Posterior vena cava (tissue), 2 donors: ENCODE measurements at regions of chr14 and their contacts with region 1.

Region 1: GRCh38 chr14:50371546-50371945 is 25.1 kb downstream of the CDKL1 start:
- DNase-seq: no peak

Region 2: GRCh38 chr14:50156111-50156510 is 215.4 kb before region 1 on chr14:
- intact Hi-C with region 1: no loop called
- DNase-seq: no peak

Region 3: DNA sequence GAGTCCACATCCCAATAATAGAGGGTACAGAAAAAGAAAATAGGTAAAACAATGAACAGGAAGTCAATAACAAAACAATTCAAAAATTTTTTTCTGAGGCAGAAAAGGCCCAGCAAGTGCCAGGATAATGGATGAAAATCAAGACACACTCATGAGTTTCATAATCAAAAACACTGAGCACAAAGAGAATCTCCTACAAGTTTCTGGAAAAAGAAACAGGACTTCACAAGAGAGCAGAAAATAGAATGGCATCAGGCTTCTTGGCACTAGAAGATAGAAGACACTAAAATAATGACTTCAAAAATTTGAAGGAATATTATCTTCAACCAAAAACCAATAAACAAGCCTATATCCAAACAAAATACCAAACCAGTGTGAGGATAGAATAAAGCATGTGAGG is 22.6 kb before region 1 on chr14:
- intact Hi-C with region 1: loop called in 1 of 2 experiments (anchors 2 kb)
- DNase-seq: no peak

Region 4: GRCh38 chr14:50434530-50434929 is 63.0 kb after region 1 on chr14:
- intact Hi-C with region 1: loop called in 1 of 2 experiments (anchors 2 kb)
- DNase-seq: no peak